Posterior cingulate gyrus (tissue), 11 donors: ENCODE measurements at regions of chr2 and their contacts with region 1.

Region 1: DNA sequence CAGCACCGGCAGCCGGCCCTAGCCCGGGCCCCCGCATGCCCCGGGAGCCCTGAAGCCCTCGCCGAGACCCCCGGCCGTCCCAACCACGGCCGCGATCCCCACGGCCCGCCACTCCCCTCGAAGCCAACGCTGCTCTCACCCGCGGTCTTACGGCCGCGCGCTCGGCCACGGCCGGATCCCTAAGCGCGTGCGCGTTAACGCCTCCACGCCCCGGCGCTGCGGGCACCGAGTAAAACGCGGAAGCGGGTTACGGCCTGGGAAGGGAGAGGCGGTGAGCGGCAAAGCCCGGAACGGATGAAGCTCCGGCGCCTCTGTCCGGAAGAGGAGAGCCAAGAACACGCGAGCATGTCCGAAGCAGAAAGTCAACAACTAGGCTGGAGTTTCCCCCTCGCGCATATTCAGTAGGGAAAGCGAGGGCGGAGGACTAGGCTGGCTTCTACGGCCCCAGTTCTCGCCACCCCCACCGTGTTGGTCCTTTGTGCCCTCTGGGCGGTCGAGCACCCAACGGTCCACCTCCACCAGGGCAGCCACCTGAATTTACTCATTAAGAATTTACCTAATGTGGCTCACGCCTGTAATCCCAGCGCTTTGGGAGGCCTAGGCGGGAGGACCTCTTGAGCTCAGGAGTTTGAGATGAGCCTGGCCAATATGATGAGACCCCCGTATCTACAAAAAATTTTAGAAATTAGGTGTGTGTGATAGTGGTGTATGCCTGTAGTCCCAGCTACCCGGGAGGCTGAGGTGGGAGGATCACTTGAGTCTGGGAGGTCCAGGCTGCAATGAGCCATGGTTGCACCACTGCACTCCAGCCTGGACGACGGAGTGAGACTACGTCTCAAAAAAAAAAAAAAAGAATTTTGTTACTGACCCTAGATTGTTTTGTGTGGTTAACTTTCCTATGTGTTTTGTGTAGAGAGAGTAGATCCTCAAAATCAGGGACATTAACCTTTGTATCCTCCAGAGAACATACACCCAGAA is at the start of gene KANSL3:
- DNase-seq: peak; percentile 84 to 98 (median 88)

Region 2: GRCh38 chr2:96760036-96760985 is 121.9 kb after region 1 on chr2 and contains the start of gene CNNM4:
- intact Hi-C with region 1: loop called (anchors 10 kb)
- DNase-seq: peak; percentile 86 to 99 (median 94)

Region 3: DNA sequence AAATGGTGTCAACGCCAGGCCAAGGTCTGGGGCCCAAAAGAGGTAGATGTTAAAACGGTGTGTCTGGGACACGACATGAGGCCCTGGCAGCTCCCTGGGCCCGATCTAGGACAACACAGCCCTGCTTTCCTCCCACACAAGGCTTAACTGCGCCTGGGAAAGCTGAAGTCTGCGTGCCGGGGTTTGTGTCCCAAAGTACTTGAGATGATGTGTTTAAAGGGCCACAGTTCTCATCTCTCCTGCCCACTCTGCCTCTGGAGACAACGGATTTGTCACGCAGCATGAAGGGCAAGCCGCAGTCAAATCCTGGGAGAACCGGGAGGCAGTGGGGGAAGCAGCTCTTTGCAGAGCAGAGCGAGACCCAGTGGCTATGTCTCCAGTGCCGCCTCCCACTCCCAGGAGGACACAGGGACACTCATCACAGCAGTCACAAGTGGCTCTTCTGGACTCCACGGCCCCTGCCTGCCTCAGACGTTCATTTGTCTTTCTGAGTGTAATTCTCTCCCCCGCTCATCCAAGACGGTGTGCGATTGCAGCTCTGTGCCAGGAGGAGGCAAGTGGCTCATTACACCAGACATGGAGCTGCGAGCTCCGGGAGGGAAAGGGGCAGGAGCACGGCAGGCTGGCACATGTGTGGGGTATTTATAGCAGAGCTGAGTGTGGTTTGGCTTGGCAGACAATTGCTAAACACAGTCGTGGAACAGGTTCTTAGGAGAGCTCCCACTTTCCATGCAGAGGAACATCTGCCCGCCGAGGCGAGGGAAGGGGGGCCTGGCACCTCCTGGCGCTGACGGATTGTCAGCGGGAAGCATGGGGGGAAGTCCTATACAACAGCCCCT is 289.2 kb after region 1 on chr2:
- intact Hi-C with region 1: no loop called
- DNase-seq: peak; percentile 56 to 97 (median 75)